ENCODE measurements at regions of chr16 and their contacts with region 1.

Region 1: GRCh38 chr16:17467923-17468540 is 2.7 kb downstream of the XYLT1 start:
- DNase-seq: peak in 6 of 9 experiments; percentile 41 to 69 (median 54)
- ATAC-seq: no peak
- H3K4me3 ChIP-seq: no peak overlapping the region
- H3K4me3 Mint-ChIP-seq: peak overlapping the region; percentile 93
- H3K27ac ChIP-seq: no peak overlapping the region
- H3K27ac Mint-ChIP-seq: no peak overlapping the region
- H3K4me1 ChIP-seq: peaks cover 32% of the 10 kb centered on the region
- H3K4me1 Mint-ChIP-seq: peaks cover 45% of the 10 kb centered on the region
- H3K27me3 ChIP-seq: no peaks in the 10 kb centered on the region
- H3K27me3 Mint-ChIP-seq: no peaks in the 10 kb centered on the region
- CTCF ChIP-seq: peak; percentile 25

Region 2: DNA sequence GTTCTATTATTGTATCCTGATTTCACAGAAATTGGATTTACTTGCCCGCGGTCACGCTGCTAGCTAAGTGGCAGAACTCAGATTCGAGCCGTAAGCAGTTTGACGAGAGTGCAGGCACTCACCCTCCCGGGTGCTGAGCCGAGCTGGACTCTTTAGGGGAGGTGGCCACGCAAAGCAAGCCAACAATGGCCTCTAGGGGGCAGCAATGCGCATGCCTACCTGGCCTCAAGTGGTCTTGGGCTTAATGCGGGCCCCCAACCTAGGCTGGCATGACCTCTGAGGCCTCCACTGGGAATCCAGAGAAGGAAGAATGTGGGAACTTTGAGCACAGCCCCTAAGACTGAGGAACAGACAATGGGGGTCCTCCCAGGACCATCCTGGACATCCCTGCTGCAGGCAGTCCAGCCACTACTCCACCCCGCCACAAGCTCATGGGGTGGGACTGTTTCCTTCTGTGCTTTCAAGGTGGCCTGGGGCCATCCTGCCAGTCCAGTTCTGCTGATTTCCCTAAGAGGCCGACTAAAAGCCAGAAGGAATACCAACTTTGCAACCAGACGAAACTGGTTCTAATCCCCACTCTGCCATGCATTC is 273.7 kb before region 1 on chr16:
- CTCF ChIA-PET with region 1: interaction called, 14 read pairs
- POLR2A ChIA-PET with region 1: no interaction called
- intact Hi-C with region 1: loop called in 1 of 2 experiments (anchors 1 kb)
- DNase-seq: peak; percentile 19 to 78 (median 67)
- ATAC-seq: no peak
- H3K4me3 ChIP-seq: no peak overlapping the region
- H3K4me3 Mint-ChIP-seq: no peak overlapping the region
- H3K27ac ChIP-seq: no peak overlapping the region
- H3K27ac Mint-ChIP-seq: no peak overlapping the region
- H3K4me1 ChIP-seq: no peaks in the 10 kb centered on the region
- H3K4me1 Mint-ChIP-seq: no peaks in the 10 kb centered on the region
- H3K27me3 ChIP-seq: no peaks in the 10 kb centered on the region
- H3K27me3 Mint-ChIP-seq: no peaks in the 10 kb centered on the region
- CTCF ChIP-seq: peak; percentile 61

Region 3: GRCh38 chr16:17211797-17212196 is 256.2 kb before region 1 on chr16:
- CTCF ChIA-PET with region 1: interaction called, 6 read pairs
- POLR2A ChIA-PET with region 1: no interaction called
- intact Hi-C with region 1: loop called (anchors 1 to 5 kb)
- DNase-seq: peak in 7 of 9 experiments; percentile 4 to 64 (median 41)
- ATAC-seq: peak; percentile 56
- H3K4me3 ChIP-seq: no peak overlapping the region
- H3K4me3 Mint-ChIP-seq: no peak overlapping the region
- H3K27ac ChIP-seq: no peak overlapping the region
- H3K27ac Mint-ChIP-seq: no peak overlapping the region
- H3K4me1 ChIP-seq: peaks cover 22% of the 10 kb centered on the region
- H3K4me1 Mint-ChIP-seq: peaks cover 19% of the 10 kb centered on the region
- H3K27me3 ChIP-seq: no peaks in the 10 kb centered on the region
- H3K27me3 Mint-ChIP-seq: no peaks in the 10 kb centered on the region
- CTCF ChIP-seq: peak; percentile 48

Region 4: DNA sequence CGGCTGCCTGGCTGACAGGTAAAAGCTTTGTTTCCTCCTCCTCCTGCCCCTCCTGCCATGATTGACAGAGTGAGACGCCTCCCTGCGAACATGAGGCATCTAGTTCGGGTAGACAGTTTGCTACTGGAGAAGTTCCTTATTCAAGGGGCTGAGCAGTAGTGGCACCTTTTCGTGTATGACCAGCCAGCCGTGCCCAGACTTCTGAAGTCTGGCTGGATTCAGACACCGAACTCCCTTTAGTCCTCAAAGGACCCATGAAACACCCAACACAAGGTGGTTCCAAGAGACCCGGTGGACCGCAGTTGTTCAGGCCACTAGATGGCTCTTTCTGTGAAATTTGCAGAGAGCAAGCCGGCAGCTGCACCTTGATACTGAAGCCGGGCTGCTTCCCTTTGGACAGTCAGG is 190.1 kb before region 1 on chr16:
- CTCF ChIA-PET with region 1: interaction called, 3 read pairs
- POLR2A ChIA-PET with region 1: no interaction called
- intact Hi-C with region 1: loop called in 1 of 2 experiments (anchors 5 kb)
- DNase-seq: peak in 5 of 9 experiments; percentile 13 to 50 (median 28)
- ATAC-seq: no peak
- H3K4me3 ChIP-seq: no peak overlapping the region
- H3K4me3 Mint-ChIP-seq: no peak overlapping the region
- H3K27ac ChIP-seq: no peak overlapping the region
- H3K27ac Mint-ChIP-seq: no peak overlapping the region
- H3K4me1 ChIP-seq: peaks cover 7% of the 10 kb centered on the region
- H3K4me1 Mint-ChIP-seq: peaks cover 48% of the 10 kb centered on the region
- H3K27me3 ChIP-seq: no peaks in the 10 kb centered on the region
- H3K27me3 Mint-ChIP-seq: no peaks in the 10 kb centered on the region
- CTCF ChIP-seq: no peak

Region 5: DNA sequence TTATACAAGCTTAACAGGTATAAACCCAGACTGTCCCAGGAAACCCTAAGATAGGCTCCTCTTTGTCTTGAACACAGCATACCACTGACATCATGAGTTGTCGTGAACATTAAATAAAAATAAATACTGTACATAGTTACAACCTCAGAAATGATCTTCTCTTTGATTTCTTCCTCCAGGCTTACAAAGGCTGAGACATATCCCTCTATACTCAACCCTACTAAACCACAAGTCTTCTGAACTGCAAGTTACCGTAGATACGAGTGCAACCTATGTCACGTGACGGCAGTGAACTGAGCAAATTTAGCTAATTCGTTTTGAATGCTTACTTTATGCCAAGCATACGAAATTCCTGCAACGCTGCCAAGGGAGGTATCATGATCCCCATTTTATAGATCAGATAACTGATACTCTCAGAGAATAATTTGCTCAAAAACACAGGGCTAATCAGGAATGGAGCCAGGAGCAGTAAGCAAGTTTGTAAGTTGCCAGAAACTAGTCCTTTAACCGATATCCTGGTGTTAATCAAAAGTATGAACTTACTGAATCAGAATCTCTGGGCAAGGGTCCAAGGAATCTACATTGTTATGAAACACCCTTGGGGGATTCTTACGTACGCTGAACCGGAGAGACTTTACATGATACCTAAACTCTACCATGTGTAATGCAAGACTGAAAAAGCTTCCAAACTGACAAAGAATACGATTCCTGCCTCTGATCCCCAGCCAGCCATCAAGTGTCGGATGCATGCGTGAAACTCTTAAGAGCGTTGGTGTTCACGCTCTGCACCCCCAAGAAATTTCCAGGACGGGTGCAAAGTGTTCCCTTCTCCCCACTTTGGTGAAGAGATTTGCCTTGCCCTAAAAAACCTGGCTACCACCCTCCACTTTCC is 103.5 kb before region 1 on chr16:
- CTCF ChIA-PET with region 1: interaction called, 5 read pairs
- POLR2A ChIA-PET with region 1: interaction called, 4 read pairs
- intact Hi-C with region 1: loop called (anchors 2 kb)
- DNase-seq: peak; percentile 35 to 93 (median 65)
- ATAC-seq: peak; percentile 77
- H3K4me3 ChIP-seq: peak overlapping the region in 1 of 2 experiments; percentile 7
- H3K4me3 Mint-ChIP-seq: peak overlapping the region; percentile 58
- H3K27ac ChIP-seq: peak overlapping the region; percentile 83 to 98
- H3K27ac Mint-ChIP-seq: peak overlapping the region; percentile 97
- H3K4me1 ChIP-seq: peaks cover 91% of the 10 kb centered on the region
- H3K4me1 Mint-ChIP-seq: peaks cover 97% of the 10 kb centered on the region
- H3K27me3 ChIP-seq: no peaks in the 10 kb centered on the region
- H3K27me3 Mint-ChIP-seq: no peaks in the 10 kb centered on the region
- CTCF ChIP-seq: no peak

Region 6: GRCh38 chr16:17416461-17417311 is 51.3 kb before region 1 on chr16:
- CTCF ChIA-PET with region 1: interaction called, 3 read pairs
- POLR2A ChIA-PET with region 1: no interaction called
- intact Hi-C with region 1: loop called (anchors 5 kb)
- DNase-seq: peak; percentile 21 to 78 (median 55)
- ATAC-seq: peak; percentile 94
- H3K4me3 ChIP-seq: peak overlapping the region; percentile 41 to 49
- H3K4me3 Mint-ChIP-seq: peak overlapping the region; percentile 87
- H3K27ac ChIP-seq: peak overlapping the region; percentile 41 to 60
- H3K27ac Mint-ChIP-seq: peak overlapping the region; percentile 92
- H3K4me1 ChIP-seq: peaks cover 16% of the 10 kb centered on the region
- H3K4me1 Mint-ChIP-seq: peaks cover 42% of the 10 kb centered on the region
- H3K27me3 ChIP-seq: no peaks in the 10 kb centered on the region
- H3K27me3 Mint-ChIP-seq: no peaks in the 10 kb centered on the region
- CTCF ChIP-seq: peak; percentile 43

Region 7: DNA sequence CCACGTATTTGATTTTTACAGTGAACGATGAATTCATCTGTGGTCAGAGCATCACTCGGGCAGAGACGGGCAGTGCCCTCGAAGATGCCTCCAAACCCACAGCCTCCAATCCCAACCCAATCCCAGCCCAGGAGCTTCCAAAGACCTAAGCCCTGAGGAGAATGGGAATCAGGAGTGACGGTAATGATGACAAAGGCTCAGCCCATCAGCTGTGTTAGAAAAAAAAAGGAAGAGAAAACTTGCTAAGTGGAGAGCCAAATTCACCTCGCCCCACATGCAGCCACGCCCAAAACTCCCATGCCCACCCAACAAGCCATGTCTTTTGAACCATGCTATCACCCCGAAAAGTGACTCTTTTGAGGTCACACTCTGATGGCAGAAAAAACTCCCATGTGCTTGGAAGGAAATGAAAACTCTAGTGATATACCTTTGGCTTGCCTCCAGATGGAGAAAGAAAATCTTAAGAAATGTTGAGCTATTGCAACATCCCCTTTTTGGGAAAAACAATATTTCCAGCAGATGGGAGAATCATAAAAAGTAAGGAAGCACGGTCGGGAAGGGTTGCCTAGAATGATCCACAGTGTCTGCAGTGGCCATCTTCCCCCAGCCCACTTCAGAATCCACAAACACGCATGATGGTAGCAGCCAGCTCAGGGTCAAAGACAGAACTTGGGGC is 35.0 kb before region 1 on chr16:
- CTCF ChIA-PET with region 1: no interaction called
- POLR2A ChIA-PET with region 1: no interaction called
- intact Hi-C with region 1: no loop called
- DNase-seq: no peak
- ATAC-seq: no peak
- H3K4me3 ChIP-seq: no peak overlapping the region
- H3K4me3 Mint-ChIP-seq: no peak overlapping the region
- H3K27ac ChIP-seq: no peak overlapping the region
- H3K27ac Mint-ChIP-seq: no peak overlapping the region
- H3K4me1 ChIP-seq: no peaks in the 10 kb centered on the region
- H3K4me1 Mint-ChIP-seq: peaks cover 18% of the 10 kb centered on the region
- H3K27me3 ChIP-seq: no peaks in the 10 kb centered on the region
- H3K27me3 Mint-ChIP-seq: no peaks in the 10 kb centered on the region
- CTCF ChIP-seq: no peak